Activated naive CD4-positive, alpha-beta T cell treated with anti-CD3 and anti-CD28 coated beads for 36 hours (primary cell): ENCODE measurements at regions of chr12 and their contacts with region 1.

Region 1: GRCh38 chr12:54337280-54337842 is 12.4 kb downstream of the COPZ1 start:
- DNase-seq: no peak
- H3K4me3 Mint-ChIP-seq: no peak overlapping the region
- H3K27ac Mint-ChIP-seq: no peak overlapping the region
- H3K4me1 Mint-ChIP-seq: peaks cover 22% of the 10 kb centered on the region
- H3K27me3 Mint-ChIP-seq: no peaks in the 10 kb centered on the region

Region 2: GRCh38 chr12:54294152-54294952 is 43.0 kb before region 1 on chr12:
- CTCF ChIA-PET with region 1: interaction called, 33 read pairs
- intact Hi-C with region 1: no loop called
- DNase-seq: peak; percentile 82
- H3K4me3 Mint-ChIP-seq: no peak overlapping the region
- H3K27ac Mint-ChIP-seq: no peak overlapping the region
- H3K4me1 Mint-ChIP-seq: no peaks in the 10 kb centered on the region
- H3K27me3 Mint-ChIP-seq: peaks cover 7% of the 10 kb centered on the region

Region 3: DNA sequence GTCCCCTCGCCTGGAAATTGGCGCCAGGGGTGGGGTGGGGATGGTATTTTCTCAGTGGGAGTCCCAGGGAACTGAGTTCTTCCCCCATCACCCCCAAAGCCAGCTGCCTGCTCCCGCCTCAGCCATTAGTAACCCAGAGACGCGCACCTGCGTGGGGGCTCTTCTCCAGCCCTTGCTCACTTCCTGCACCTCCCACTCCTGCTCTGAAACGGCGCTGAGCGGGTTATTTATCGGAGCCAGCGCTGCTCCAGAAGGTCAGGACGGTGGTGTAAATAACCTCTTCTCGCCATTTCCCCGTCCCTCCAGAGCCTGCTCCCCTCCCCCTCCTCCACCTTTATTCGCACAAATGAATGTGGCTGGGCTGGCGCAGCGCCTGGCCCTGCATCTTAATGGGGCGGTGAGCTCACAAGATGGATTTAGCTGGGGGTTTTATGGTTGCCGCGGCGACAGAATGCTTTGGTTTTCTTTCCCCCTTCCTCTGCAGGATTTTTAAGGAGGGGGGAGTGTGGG is 14.7 kb after region 1 on chr12:
- CTCF ChIA-PET with region 1: interaction called, 92 read pairs
- intact Hi-C with region 1: no loop called
- DNase-seq: peak; percentile 73
- H3K4me3 Mint-ChIP-seq: peak overlapping the region; percentile 44
- H3K27ac Mint-ChIP-seq: peak overlapping the region; percentile 73
- H3K4me1 Mint-ChIP-seq: peaks cover 20% of the 10 kb centered on the region
- H3K27me3 Mint-ChIP-seq: no peaks in the 10 kb centered on the region